CD8-positive, alpha-beta T cell (primary cell): ENCODE measurements at regions of chr3 and their contacts with region 1.

Region 1: GRCh38 chr3:141192345-141192744 is 39.3 kb upstream of the PXYLP1 start:
- DNase-seq: peak; percentile 93 to 99 (median 97)
- ATAC-seq: peak; percentile 100
- H3K4me3 ChIP-seq: no peak overlapping the region
- H3K4me3 Mint-ChIP-seq: no peak overlapping the region
- H3K27ac ChIP-seq: no peak overlapping the region
- H3K27ac Mint-ChIP-seq: no peak overlapping the region
- H3K4me1 ChIP-seq: no peaks in the 10 kb centered on the region
- H3K4me1 Mint-ChIP-seq: peaks cover 11% of the 10 kb centered on the region
- H3K27me3 ChIP-seq: no peaks in the 10 kb centered on the region
- H3K27me3 Mint-ChIP-seq: peaks cover 2% of the 10 kb centered on the region
- CTCF ChIP-seq: peak; percentile 93

Region 2: GRCh38 chr3:139427283-139427993 is 1764.9 kb before region 1 on chr3:
- CTCF ChIA-PET with region 1: interaction called, 3 read pairs
- POLR2A ChIA-PET with region 1: no interaction called
- intact Hi-C with region 1: loop called in 1 of 2 experiments (anchors 2 kb)
- DNase-seq: peak in 2 of 9 experiments; percentile 47 to 58
- ATAC-seq: no peak
- H3K4me3 ChIP-seq: no peak overlapping the region
- H3K4me3 Mint-ChIP-seq: no peak overlapping the region
- H3K27ac ChIP-seq: no peak overlapping the region
- H3K27ac Mint-ChIP-seq: no peak overlapping the region
- H3K4me1 ChIP-seq: no peaks in the 10 kb centered on the region
- H3K4me1 Mint-ChIP-seq: peaks cover 4% of the 10 kb centered on the region
- H3K27me3 ChIP-seq: peaks cover 0 to 2% of the 10 kb centered on the region in 2 experiments
- H3K27me3 Mint-ChIP-seq: no peaks in the 10 kb centered on the region
- CTCF ChIP-seq: peak; percentile 73

Region 3: DNA sequence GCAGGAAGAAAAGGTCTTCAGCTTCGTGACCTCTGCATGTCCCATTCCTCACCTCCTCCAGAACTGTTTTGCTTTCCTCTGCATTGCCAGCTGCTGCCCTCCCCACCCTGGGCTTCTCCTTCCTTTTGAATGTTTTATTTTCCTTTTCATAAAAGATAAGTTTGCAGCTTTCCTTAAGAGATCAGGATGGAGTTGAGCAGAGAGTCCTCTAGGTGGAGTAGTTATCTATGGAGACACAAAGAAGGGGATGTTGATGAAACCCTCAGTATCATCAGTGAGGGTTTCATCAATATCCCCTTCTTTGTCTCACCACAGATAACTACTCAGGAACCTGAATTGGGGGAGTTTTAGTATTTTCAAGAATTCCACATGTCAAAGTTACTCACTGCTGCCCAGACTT is 269.7 kb before region 1 on chr3:
- CTCF ChIA-PET with region 1: interaction called, 3 read pairs
- POLR2A ChIA-PET with region 1: no interaction called
- intact Hi-C with region 1: loop called in 1 of 2 experiments (anchors 5 kb)
- DNase-seq: peak in 2 of 9 experiments; percentile 26 to 43
- ATAC-seq: peak; percentile 55
- H3K4me3 ChIP-seq: no peak overlapping the region
- H3K4me3 Mint-ChIP-seq: no peak overlapping the region
- H3K27ac ChIP-seq: no peak overlapping the region
- H3K27ac Mint-ChIP-seq: no peak overlapping the region
- H3K4me1 ChIP-seq: no peaks in the 10 kb centered on the region
- H3K4me1 Mint-ChIP-seq: no peaks in the 10 kb centered on the region
- H3K27me3 ChIP-seq: peaks cover 0 to 2% of the 10 kb centered on the region in 2 experiments
- H3K27me3 Mint-ChIP-seq: peaks cover 9% of the 10 kb centered on the region
- CTCF ChIP-seq: peak; percentile 44

Region 4: GRCh38 chr3:141000027-141000663 is 192.2 kb before region 1 on chr3:
- CTCF ChIA-PET with region 1: interaction called, 12 read pairs
- POLR2A ChIA-PET with region 1: no interaction called
- intact Hi-C with region 1: loop called (anchors 1 kb)
- DNase-seq: peak in 8 of 9 experiments; percentile 3 to 72 (median 48)
- ATAC-seq: peak; percentile 87
- H3K4me3 ChIP-seq: no peak overlapping the region
- H3K4me3 Mint-ChIP-seq: no peak overlapping the region
- H3K27ac ChIP-seq: no peak overlapping the region
- H3K27ac Mint-ChIP-seq: no peak overlapping the region
- H3K4me1 ChIP-seq: no peaks in the 10 kb centered on the region
- H3K4me1 Mint-ChIP-seq: no peaks in the 10 kb centered on the region
- H3K27me3 ChIP-seq: no peaks in the 10 kb centered on the region
- H3K27me3 Mint-ChIP-seq: no peaks in the 10 kb centered on the region
- CTCF ChIP-seq: peak; percentile 39

Region 5: GRCh38 chr3:141105828-141106628 is 86.3 kb before region 1 on chr3:
- CTCF ChIA-PET with region 1: interaction called, 4 read pairs
- POLR2A ChIA-PET with region 1: no interaction called
- intact Hi-C with region 1: loop called (anchors 1 to 5 kb)
- DNase-seq: peak; percentile 21 to 81 (median 63)
- ATAC-seq: peak; percentile 49
- H3K4me3 ChIP-seq: no peak overlapping the region
- H3K4me3 Mint-ChIP-seq: no peak overlapping the region
- H3K27ac ChIP-seq: no peak overlapping the region
- H3K27ac Mint-ChIP-seq: no peak overlapping the region
- H3K4me1 ChIP-seq: no peaks in the 10 kb centered on the region
- H3K4me1 Mint-ChIP-seq: no peaks in the 10 kb centered on the region
- H3K27me3 ChIP-seq: no peaks in the 10 kb centered on the region
- H3K27me3 Mint-ChIP-seq: no peaks in the 10 kb centered on the region
- CTCF ChIP-seq: peak; percentile 70

Region 6: GRCh38 chr3:141223673-141224166 is 31.4 kb after region 1 on chr3:
- CTCF ChIA-PET with region 1: no interaction called
- POLR2A ChIA-PET with region 1: no interaction called
- intact Hi-C with region 1: no loop called
- DNase-seq: no peak
- ATAC-seq: no peak
- H3K4me3 ChIP-seq: no peak overlapping the region
- H3K4me3 Mint-ChIP-seq: no peak overlapping the region
- H3K27ac ChIP-seq: no peak overlapping the region
- H3K27ac Mint-ChIP-seq: no peak overlapping the region
- H3K4me1 ChIP-seq: no peaks in the 10 kb centered on the region
- H3K4me1 Mint-ChIP-seq: no peaks in the 10 kb centered on the region
- H3K27me3 ChIP-seq: no peaks in the 10 kb centered on the region
- H3K27me3 Mint-ChIP-seq: no peaks in the 10 kb centered on the region
- CTCF ChIP-seq: no peak

Region 7: GRCh38 chr3:141255846-141256261 is 63.5 kb after region 1 on chr3:
- CTCF ChIA-PET with region 1: interaction called, 3 read pairs
- POLR2A ChIA-PET with region 1: no interaction called
- intact Hi-C with region 1: loop called in 1 of 2 experiments (anchors 2 kb)
- DNase-seq: peak in 6 of 9 experiments; percentile 29 to 79 (median 58)
- ATAC-seq: peak; percentile 98
- H3K4me3 ChIP-seq: no peak overlapping the region
- H3K4me3 Mint-ChIP-seq: no peak overlapping the region
- H3K27ac ChIP-seq: no peak overlapping the region
- H3K27ac Mint-ChIP-seq: peak overlapping the region; percentile 80
- H3K4me1 ChIP-seq: peaks cover 13% of the 10 kb centered on the region
- H3K4me1 Mint-ChIP-seq: peaks cover 35% of the 10 kb centered on the region
- H3K27me3 ChIP-seq: no peaks in the 10 kb centered on the region
- H3K27me3 Mint-ChIP-seq: no peaks in the 10 kb centered on the region
- CTCF ChIP-seq: peak; percentile 55

Region 8: GRCh38 chr3:141452036-141452435 is 259.7 kb after region 1 on chr3:
- CTCF ChIA-PET with region 1: no interaction called
- POLR2A ChIA-PET with region 1: no interaction called
- intact Hi-C with region 1: loop called in 1 of 2 experiments (anchors 5 kb)
- DNase-seq: peak in 5 of 9 experiments; percentile 28 to 77 (median 55)
- ATAC-seq: peak; percentile 88
- H3K4me3 ChIP-seq: no peak overlapping the region
- H3K4me3 Mint-ChIP-seq: no peak overlapping the region
- H3K27ac ChIP-seq: peak overlapping the region in 1 of 2 experiments; percentile 51
- H3K27ac Mint-ChIP-seq: no peak overlapping the region
- H3K4me1 ChIP-seq: peaks cover 15% of the 10 kb centered on the region
- H3K4me1 Mint-ChIP-seq: peaks cover 7% of the 10 kb centered on the region
- H3K27me3 ChIP-seq: no peaks in the 10 kb centered on the region
- H3K27me3 Mint-ChIP-seq: peaks cover 2% of the 10 kb centered on the region
- CTCF ChIP-seq: peak; percentile 55